Activated T-helper 1 cell treated with anti-CD3 and anti-CD28 coated beads, Interleukin-12 subunit alpha, Interleukin-12 subunit beta, Interleukin-2, Interleukin-4 antibody, amounts not matched to agents 30 ng/mL and 10 ng/mL and 1 ng/mL, durations not matched to agents 14 hours and 24 hours and 36 hours (primary cell): ENCODE measurements at regions of chr2 and their contacts with region 1.

Region 1: GRCh38 chr2:216034065-216034464 is 20.7 kb upstream of the MREG start:
- DNase-seq: peak; percentile 65
- H3K4me3 Mint-ChIP-seq: no peak overlapping the region
- H3K27ac Mint-ChIP-seq: peak overlapping the region; percentile 64
- H3K4me1 Mint-ChIP-seq: peaks cover 47% of the 10 kb centered on the region
- H3K27me3 Mint-ChIP-seq: no peaks in the 10 kb centered on the region

Region 2: DNA sequence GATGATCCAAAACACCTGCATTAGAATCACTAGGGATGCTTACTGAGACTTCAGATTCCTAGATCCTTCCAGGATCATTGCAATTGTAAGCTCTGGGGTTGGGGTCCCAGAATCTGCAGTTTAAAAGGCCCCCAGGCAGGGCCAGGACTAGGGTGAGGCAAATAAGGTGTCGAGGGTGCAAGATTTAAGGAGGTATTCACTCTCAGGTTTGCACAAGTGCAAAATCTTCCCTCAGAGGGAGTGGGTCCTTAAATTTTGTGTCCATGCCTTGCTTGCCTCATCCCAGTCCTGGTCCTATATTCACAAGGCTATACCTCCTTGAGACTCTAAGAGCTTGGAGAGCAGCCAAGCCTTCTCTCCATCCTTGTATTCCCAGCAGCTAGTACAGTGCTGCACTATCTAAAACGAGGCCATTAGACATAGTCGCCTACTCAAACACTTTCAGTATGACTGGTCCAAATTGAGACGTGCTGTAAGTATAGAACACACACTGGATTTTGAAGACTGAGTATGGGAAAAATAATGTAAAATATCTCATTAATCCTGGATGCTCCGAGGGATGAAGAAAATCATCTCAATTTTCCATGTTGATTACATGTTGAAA is 10.9 kb after region 1 on chr2:
- intact Hi-C with region 1: loop called (anchors 1 kb)
- DNase-seq: no peak
- H3K4me3 Mint-ChIP-seq: no peak overlapping the region
- H3K27ac Mint-ChIP-seq: no peak overlapping the region
- H3K4me1 Mint-ChIP-seq: peaks cover 9% of the 10 kb centered on the region
- H3K27me3 Mint-ChIP-seq: no peaks in the 10 kb centered on the region

Region 3: DNA sequence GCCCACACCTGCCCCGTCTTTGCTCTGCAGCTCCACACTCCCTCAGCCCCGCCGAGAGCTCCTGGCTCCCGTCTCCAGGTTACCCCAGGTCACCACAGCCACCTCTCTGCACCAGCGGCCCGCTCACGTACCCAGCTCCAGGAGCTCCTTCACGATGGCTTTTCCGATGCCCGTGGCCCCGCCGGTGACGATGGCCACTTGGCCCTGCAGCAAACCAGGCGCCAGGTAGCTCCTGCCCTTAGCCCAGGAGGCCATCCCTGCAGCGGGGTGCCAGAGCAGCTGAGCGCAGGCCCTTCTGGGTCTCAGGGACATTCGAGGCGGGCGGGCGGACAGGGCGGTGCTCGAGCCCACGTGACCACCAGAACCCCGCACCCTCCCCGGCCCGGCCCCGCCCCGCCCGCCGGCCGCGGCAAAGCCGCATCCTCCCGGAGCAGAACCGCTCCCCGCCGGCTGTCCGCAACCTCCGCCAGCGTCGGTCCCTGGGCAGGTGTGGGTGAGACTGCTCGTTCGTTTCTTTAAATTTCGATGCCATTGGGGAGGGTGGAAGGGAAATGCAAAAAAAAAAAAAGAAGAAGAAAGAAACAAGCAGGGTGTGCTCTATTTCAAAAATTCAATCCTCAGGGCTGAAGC is 47.5 kb after region 1 on chr2 and contains the starts of genes PECR and TMEM169:
- intact Hi-C with region 1: loop called (anchors 1 kb)
- DNase-seq: peak; percentile 74
- H3K4me3 Mint-ChIP-seq: peak within 1 kb of the TSS; percentile 99
- H3K27ac Mint-ChIP-seq: peak within 1 kb of the TSS; percentile 84
- H3K4me1 Mint-ChIP-seq: peaks cover 49% of the 10 kb centered on the region
- H3K27me3 Mint-ChIP-seq: no peaks in the 10 kb centered on the region
- total RNA-seq, gene PECR: 14.0 and 17.6 TPM in 2 replicates
- total RNA-seq, gene TMEM169: 0.93 and 2.2 TPM in 2 replicates

Region 4: DNA sequence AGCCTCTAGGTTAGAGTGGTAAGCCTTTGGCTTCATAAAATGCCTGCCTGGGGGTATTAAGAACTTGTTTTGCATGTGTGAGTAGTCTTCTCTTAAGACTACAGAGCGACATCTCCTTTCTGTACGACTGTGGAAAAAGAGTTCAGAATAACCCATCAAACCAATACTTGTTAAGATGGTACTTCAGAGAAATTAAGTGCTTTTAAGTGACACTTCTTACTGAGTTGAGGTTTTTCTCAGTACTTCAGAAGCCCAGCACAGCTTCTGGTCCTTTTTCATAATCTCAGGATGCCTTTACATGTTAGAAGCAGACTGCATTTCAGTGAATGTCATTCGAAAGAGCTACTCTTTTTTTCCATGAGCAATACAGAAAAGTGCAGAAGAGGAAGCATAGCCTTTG is 85.9 kb after region 1 on chr2:
- intact Hi-C with region 1: loop called (anchors 1 kb)
- DNase-seq: no peak
- H3K4me3 Mint-ChIP-seq: peak overlapping the region; percentile 78
- H3K27ac Mint-ChIP-seq: peak overlapping the region; percentile 95
- H3K4me1 Mint-ChIP-seq: peaks cover 78% of the 10 kb centered on the region
- H3K27me3 Mint-ChIP-seq: no peaks in the 10 kb centered on the region

Region 5: DNA sequence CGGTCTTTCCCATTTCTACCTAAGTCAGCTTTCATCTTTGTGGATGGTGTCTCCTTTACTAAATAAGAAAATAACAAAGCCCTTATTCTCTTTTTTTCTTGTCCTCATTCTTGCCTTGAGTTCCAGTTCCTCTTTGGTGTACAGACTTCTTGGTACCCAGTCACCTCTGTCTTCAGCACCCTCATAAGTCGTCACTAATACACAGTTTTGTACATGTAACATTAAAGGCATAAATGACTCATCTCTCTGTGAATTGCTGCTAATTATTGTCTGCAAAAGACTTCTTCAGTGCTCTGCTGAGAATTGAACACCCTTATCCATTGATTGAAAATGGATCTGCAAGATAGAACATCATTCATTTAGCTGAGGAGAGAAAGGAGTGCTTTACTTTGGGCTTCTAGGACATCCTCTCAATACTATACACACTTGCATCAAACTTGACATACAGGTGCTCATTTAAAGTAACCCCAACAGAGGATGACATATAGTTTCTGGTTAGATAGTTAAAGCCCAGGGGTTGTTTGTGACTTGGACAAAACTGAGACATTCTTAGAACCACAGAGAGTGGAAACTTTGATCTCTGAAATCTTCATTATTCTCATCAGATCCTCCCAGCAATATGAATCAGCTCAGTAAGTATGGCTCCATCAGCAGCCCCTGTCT is 172.1 kb after region 1 on chr2:
- intact Hi-C with region 1: loop called (anchors 2 kb)
- DNase-seq: no peak
- H3K4me3 Mint-ChIP-seq: no peak overlapping the region
- H3K27ac Mint-ChIP-seq: peak overlapping the region; percentile 87
- H3K4me1 Mint-ChIP-seq: peaks cover 79% of the 10 kb centered on the region
- H3K27me3 Mint-ChIP-seq: no peaks in the 10 kb centered on the region